ENCODE measurements at regions of chr1 and their contacts with region 1.

Region 1: DNA sequence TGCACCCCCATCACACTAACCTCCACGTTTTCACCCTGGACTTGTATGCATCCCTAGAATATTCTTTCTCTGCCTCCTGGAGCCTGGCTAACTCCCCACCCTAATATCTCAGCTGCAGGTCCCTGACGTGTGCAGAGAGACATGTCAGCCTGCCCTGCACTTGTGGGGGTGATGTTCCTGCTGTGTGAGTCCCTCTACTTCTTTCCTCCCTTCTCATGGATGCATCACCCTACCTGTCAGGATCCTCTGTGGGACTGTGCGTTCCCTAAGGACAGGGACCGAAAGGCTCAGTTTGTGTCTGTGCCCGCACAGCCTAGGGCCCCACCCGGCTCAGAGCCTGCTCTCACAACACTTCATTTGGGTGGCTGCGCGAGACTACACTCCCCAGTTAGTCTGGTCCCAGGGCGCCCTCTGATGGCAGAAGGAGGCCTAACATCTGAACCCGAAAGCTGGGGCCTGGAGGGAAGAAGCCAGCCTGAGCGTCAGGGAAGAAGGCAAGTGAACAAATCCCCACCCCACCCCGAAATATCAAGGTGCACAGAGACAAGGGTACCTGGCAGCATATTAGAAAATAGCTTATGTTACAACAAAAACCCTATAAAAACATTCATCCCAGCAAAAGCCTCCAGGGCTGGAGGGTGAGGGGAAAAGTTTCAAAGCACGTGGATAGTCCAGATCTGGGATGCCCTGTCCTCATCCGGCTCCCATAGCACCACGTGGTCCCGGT is 3.7 kb downstream of the CD52 start:
- DNase-seq: peak; percentile 97
- ATAC-seq: peak; percentile 74
- H3K4me3 Mint-ChIP-seq: peak overlapping the region; percentile 73
- H3K27ac Mint-ChIP-seq: peak overlapping the region; percentile 95
- H3K4me1 Mint-ChIP-seq: peaks cover 49% of the 10 kb centered on the region
- H3K27me3 Mint-ChIP-seq: no peaks in the 10 kb centered on the region

Region 2: GRCh38 chr1:26169669-26170471 is 151.6 kb before region 1 on chr1 and contains the start of gene ZNF593:
- CTCF ChIA-PET with region 1: interaction called, 22 read pairs
- DNase-seq: peak; percentile 92
- ATAC-seq: peak; percentile 97
- H3K4me3 Mint-ChIP-seq: peak within 1 kb of the TSS; percentile 89
- H3K27ac Mint-ChIP-seq: peak within 1 kb of the TSS; percentile 88
- H3K4me1 Mint-ChIP-seq: peaks cover 26% of the 10 kb centered on the region
- H3K27me3 Mint-ChIP-seq: peaks cover 11% of the 10 kb centered on the region
- total RNA-seq, gene ZNF593: 40.1 to 48.1 TPM

Region 3: GRCh38 chr1:26306290-26307229 is 14.9 kb before region 1 on chr1 and contains the start of gene UBXN11:
- CTCF ChIA-PET with region 1: interaction called, 28 read pairs
- DNase-seq: peak; percentile 98
- ATAC-seq: peak; percentile 99
- H3K4me3 Mint-ChIP-seq: peak within 1 kb of the TSS; percentile 86
- H3K27ac Mint-ChIP-seq: peak within 1 kb of the TSS; percentile 91
- H3K4me1 Mint-ChIP-seq: peaks cover 33% of the 10 kb centered on the region
- H3K27me3 Mint-ChIP-seq: no peaks in the 10 kb centered on the region
- total RNA-seq, gene UBXN11: 27.7 to 39.3 TPM

Region 4: GRCh38 chr1:26336477-26337205 is 15.2 kb after region 1 on chr1:
- CTCF ChIA-PET with region 1: interaction called, 12 read pairs
- DNase-seq: peak; percentile 91
- ATAC-seq: peak; percentile 94
- H3K4me3 Mint-ChIP-seq: peak overlapping the region; percentile 89
- H3K27ac Mint-ChIP-seq: no peak overlapping the region
- H3K4me1 Mint-ChIP-seq: peaks cover 18% of the 10 kb centered on the region
- H3K27me3 Mint-ChIP-seq: peaks cover 2% of the 10 kb centered on the region

Region 5: GRCh38 chr1:26358411-26359384 is 37.2 kb after region 1 on chr1:
- CTCF ChIA-PET with region 1: interaction called, 24 read pairs
- DNase-seq: peak; percentile 93
- ATAC-seq: peak; percentile 89
- H3K4me3 Mint-ChIP-seq: peak overlapping the region; percentile 48
- H3K27ac Mint-ChIP-seq: peak overlapping the region; percentile 66
- H3K4me1 Mint-ChIP-seq: peaks cover 51% of the 10 kb centered on the region
- H3K27me3 Mint-ChIP-seq: peaks cover 13% of the 10 kb centered on the region

Region 6: DNA sequence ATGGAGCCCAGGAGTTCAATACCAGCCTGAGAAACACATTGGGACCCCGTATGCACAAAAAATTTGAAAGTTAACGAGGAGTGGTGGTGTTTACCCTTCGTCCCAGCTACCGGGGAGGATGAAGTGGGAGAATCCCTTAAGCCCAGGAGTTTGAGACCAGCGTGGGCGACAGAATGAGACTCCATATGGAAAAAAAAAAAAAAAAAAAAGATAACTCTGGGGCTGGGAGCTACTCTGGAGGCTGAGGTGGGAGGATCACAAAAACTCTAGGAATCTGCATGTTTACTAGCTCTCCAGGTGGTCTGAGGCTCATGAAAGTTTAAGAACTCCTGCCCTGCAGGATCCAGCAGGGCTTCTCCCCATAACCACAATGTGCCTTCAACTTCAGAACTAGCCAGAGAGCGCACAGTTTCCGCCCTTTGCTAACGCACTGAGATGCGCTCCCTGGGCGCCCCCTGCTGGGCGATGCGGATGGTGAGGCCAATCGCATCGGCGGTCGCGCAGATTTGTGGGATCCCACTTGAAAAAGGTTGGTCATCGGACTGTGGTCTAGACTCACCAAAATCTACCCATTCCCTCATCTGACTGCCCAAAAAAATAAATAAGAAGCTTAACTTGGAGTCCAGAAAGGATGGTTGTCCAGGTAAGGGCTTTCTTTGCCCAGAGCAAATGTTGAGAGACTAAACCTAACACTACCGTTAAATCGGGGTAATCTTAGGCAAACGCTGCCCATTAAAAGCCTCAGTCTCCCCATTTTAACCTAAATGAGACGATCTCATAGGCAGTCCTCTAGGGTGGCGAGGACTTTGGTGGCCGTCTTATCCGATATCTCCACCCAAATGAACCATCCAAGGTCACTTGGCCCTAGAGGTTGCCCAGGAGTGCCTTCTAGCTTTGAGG is 42.3 kb after region 1 on chr1:
- CTCF ChIA-PET with region 1: interaction called, 24 read pairs
- DNase-seq: peak; percentile 90
- ATAC-seq: peak; percentile 76
- H3K4me3 Mint-ChIP-seq: peak overlapping the region; percentile 7
- H3K27ac Mint-ChIP-seq: peak overlapping the region; percentile 72
- H3K4me1 Mint-ChIP-seq: peaks cover 53% of the 10 kb centered on the region
- H3K27me3 Mint-ChIP-seq: peaks cover 23% of the 10 kb centered on the region

Region 7: GRCh38 chr1:26399034-26399433 is 77.6 kb after region 1 on chr1:
- CTCF ChIA-PET with region 1: interaction called, 14 read pairs
- DNase-seq: no peak
- ATAC-seq: no peak
- H3K4me3 Mint-ChIP-seq: no peak overlapping the region
- H3K27ac Mint-ChIP-seq: no peak overlapping the region
- H3K4me1 Mint-ChIP-seq: peaks cover 5% of the 10 kb centered on the region
- H3K27me3 Mint-ChIP-seq: peaks cover 20% of the 10 kb centered on the region